ENCODE measurements at regions of chr19 and their contacts with region 1.

Region 1: DNA sequence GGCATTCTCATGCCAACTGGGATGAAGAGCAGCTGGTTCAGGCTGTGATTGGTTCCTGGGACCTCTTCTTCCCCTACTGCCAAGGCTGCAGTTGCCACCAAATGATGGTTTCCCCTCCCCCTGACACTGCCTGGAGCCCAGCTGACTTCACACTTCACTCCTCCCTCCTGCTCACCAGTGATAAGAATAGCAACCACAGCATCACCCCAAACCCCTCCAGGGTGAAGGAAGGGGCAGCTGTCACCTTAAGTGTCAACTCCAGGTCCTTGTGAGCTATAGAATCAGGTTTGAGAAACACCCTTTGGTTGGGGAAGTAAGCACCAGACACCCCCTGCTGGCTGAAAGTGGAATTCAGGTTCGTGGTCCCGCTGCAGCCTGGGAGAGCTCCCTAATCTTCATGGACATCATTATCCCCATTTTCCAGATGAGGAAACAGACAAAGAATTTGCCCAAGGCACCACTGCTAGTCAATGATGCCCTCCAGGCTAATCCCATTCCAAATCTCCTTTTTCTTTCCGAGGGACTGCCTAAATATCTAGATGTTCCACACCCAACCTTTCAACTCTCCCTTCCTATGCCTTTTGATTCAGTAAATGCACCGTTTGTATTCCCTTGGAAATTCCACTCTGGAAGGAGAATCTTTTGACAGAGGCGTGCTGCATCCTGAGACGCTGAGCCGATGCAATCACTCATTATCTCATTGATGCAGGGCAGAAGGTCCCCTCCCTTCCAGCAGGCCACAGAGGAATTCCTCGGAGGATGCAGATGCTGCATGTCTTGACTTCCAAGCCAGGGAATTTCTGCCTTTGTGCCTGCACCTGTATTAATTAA is 50.6 kb upstream of the UQCRFS1 start:
- DNase-seq: peak; percentile 53 to 62
- H3K4me3 ChIP-seq: no peak overlapping the region
- H3K4me3 Mint-ChIP-seq: no peak overlapping the region
- H3K27ac Mint-ChIP-seq: no peak overlapping the region
- H3K4me1 ChIP-seq: no peaks in the 10 kb centered on the region
- H3K4me1 Mint-ChIP-seq: no peaks in the 10 kb centered on the region
- H3K27me3 ChIP-seq: no peaks in the 10 kb centered on the region
- H3K27me3 Mint-ChIP-seq: peaks cover 5% of the 10 kb centered on the region
- CTCF ChIP-seq: peak; percentile 66 to 80

Region 2: GRCh38 chr19:29119590-29119989 is 143.9 kb before region 1 on chr19:
- CTCF ChIA-PET with region 1: interaction called, 5 read pairs
- POLR2A ChIA-PET with region 1: no interaction called
- intact Hi-C with region 1: loop called (anchors 1 kb)
- DNase-seq: peak in 1 of 2 experiments; percentile 11
- H3K4me3 ChIP-seq: no peak overlapping the region
- H3K4me3 Mint-ChIP-seq: no peak overlapping the region
- H3K27ac Mint-ChIP-seq: no peak overlapping the region
- H3K4me1 ChIP-seq: no peaks in the 10 kb centered on the region
- H3K4me1 Mint-ChIP-seq: no peaks in the 10 kb centered on the region
- H3K27me3 ChIP-seq: no peaks in the 10 kb centered on the region
- H3K27me3 Mint-ChIP-seq: no peaks in the 10 kb centered on the region
- CTCF ChIP-seq: peak in 1 of 2 experiments; percentile 27

Region 3: GRCh38 chr19:29806098-29806866 is 542.8 kb after region 1 on chr19:
- CTCF ChIA-PET with region 1: interaction called, 10 read pairs
- POLR2A ChIA-PET with region 1: no interaction called
- intact Hi-C with region 1: no loop called
- DNase-seq: peak; percentile 24 to 62
- H3K4me3 ChIP-seq: no peak overlapping the region
- H3K4me3 Mint-ChIP-seq: no peak overlapping the region
- H3K27ac Mint-ChIP-seq: no peak overlapping the region
- H3K4me1 ChIP-seq: peaks cover 9% of the 10 kb centered on the region
- H3K4me1 Mint-ChIP-seq: peaks cover 5% of the 10 kb centered on the region
- H3K27me3 ChIP-seq: no peaks in the 10 kb centered on the region
- H3K27me3 Mint-ChIP-seq: no peaks in the 10 kb centered on the region
- CTCF ChIP-seq: no peak

Measured in Caco-2 (cell line).